Aorta (tissue), 5 donors: ENCODE measurements at regions of chr22 and their contacts with region 1.

Region 1: GRCh38 chr22:45537734-45538181 is 35.1 kb downstream of the FBLN1 start:
- DNase-seq: peak; percentile 84 to 92
- ATAC-seq: peak; percentile 84
- H3K4me3 ChIP-seq: no peak overlapping the region
- H3K27ac ChIP-seq: peak overlapping the region; percentile 7 to 35
- H3K4me1 ChIP-seq: peaks cover 0 to 4% of the 10 kb centered on the region in 2 donors
- H3K27me3 ChIP-seq: no peaks in the 10 kb centered on the region

Region 2: DNA sequence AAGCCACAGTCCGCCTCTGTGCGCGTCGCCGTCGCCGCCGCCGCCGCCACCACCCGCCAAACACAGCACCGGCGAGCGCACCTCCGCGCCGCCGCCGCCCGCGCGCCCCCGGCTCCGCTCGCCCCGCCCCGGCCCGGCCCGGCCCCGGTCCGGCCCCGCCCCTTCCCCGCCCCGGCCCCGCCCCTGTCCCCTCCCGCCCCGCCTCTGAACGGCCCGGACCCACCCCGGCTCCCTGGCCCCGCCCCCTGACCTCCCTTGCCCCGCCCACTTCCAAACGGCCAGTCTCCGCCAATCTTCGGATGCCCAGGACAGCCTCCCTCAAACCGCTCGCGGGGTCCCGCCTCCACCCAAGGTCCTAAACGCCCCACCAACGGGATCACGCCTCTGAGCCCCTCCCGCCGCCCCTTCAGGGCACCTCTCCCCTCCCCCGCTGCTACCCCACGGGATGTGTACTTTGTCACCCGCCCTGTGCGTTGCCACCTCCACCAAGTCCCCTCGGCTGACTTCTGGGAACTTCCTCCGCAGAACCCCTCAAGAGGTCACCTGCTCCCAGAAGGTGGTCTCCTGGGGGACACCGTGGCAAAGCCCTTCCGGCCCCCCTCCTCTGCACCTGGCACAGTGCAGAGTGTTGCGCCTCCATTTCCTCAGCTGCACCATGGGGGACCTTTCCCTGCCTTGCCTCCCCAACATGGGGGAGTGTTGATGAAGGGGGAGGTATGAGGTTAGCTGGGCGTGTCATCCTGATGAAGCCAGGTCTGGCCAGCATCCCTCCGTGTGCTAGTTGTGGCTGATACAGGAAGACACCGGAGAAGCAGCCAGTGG is 296.7 kb before region 1 on chr22 and contains the start of gene KIAA0930:
- intact Hi-C with region 1: no loop called
- DNase-seq: peak; percentile 92 to 97
- ATAC-seq: peak; percentile 89
- H3K4me3 ChIP-seq: peak within 1 kb of the TSS; percentile 28 to 79
- H3K27ac ChIP-seq: peak within 1 kb of the TSS in 1 of 2 donors; percentile 7
- H3K4me1 ChIP-seq: no peaks in the 10 kb centered on the region
- H3K27me3 ChIP-seq: no peaks in the 10 kb centered on the region
- total RNA-seq, gene KIAA0930: 46.9 to 101 TPM

Region 3: DNA sequence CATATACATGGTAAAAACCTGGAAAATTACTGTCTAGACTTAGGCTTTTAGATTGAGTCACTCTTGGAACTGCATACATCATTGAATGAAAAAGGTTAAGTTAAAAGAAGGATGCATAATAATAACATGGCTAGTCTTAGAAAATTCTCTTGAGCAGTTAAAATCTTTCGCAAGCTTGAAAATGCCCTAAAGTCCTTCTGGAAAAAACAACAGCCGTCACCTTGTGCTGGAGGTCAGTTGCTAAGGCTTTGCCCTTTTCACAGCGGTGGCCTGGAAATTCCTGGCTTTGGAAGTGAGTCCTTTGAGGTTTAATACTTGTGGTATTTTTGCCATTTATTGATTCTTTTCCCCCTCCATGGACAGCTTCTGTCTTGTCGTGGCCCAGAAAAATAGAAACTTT is 52.5 kb before region 1 on chr22:
- intact Hi-C with region 1: loop called in 1 of 2 experiments (anchors 5 kb)
- DNase-seq: no peak
- ATAC-seq: peak; percentile 44
- H3K4me3 ChIP-seq: no peak overlapping the region
- H3K27ac ChIP-seq: no peak overlapping the region
- H3K4me1 ChIP-seq: no peaks in the 10 kb centered on the region
- H3K27me3 ChIP-seq: no peaks in the 10 kb centered on the region

Region 4: DNA sequence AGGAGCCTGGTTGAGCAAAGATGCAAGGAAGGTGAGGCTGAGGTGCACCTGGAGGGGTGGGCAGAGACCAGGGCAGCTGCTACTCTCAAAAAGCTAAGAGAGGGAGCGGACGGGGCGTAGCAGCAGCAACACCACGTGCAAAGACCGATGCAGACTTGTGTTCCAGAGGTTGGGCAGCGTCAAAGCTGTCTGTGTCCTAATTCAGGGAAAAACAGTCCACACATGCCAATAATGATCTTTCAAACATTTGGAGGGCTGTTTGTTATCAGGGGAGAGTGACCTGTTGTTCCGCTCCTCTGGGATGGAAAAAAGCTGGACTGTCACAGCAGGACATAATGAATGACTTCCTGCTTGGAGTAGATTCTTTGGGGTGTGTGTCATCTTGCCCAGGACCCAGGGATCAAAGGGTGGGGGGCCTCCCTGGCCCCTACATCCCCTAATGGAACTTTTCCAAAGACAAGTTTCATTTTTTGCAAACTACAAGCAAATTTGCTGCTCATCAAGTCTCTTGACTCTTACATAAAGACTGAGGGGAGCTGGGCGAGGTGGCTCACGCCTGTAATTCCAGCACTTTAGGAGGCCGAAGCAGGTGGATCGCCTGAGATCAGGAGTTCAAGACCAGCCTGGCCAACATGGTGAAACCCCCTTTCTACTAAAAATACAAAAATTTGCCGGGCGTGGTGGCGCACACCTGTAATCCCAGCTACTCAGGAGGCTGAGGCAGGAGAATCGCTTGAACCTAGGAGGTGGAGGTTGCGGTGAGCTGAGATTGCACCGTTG is 41.2 kb before region 1 on chr22:
- intact Hi-C with region 1: no loop called
- DNase-seq: peak; percentile 51 to 66
- ATAC-seq: peak; percentile 49
- H3K4me3 ChIP-seq: no peak overlapping the region
- H3K27ac ChIP-seq: no peak overlapping the region
- H3K4me1 ChIP-seq: no peaks in the 10 kb centered on the region
- H3K27me3 ChIP-seq: no peaks in the 10 kb centered on the region

Region 5: GRCh38 chr22:45553351-45554039 is 15.7 kb after region 1 on chr22:
- intact Hi-C with region 1: no loop called
- DNase-seq: peak; percentile 87 to 96
- ATAC-seq: peak; percentile 83
- H3K4me3 ChIP-seq: no peak overlapping the region
- H3K27ac ChIP-seq: peak overlapping the region; percentile 80 to 99
- H3K4me1 ChIP-seq: peaks cover 0 to 3% of the 10 kb centered on the region in 2 donors
- H3K27me3 ChIP-seq: no peaks in the 10 kb centered on the region

Region 6: GRCh38 chr22:45742866-45743450 is 205.2 kb after region 1 on chr22:
- intact Hi-C with region 1: no loop called
- DNase-seq: peak in 1 of 2 donors; percentile 61
- ATAC-seq: no peak
- H3K4me3 ChIP-seq: no peak overlapping the region
- H3K27ac ChIP-seq: peak overlapping the region; percentile 62 to 98
- H3K4me1 ChIP-seq: peaks cover 8 to 16% of the 10 kb centered on the region in 2 donors
- H3K27me3 ChIP-seq: no peaks in the 10 kb centered on the region